ENCODE measurements at regions of chr6 and their contacts with region 1.

Region 1: DNA sequence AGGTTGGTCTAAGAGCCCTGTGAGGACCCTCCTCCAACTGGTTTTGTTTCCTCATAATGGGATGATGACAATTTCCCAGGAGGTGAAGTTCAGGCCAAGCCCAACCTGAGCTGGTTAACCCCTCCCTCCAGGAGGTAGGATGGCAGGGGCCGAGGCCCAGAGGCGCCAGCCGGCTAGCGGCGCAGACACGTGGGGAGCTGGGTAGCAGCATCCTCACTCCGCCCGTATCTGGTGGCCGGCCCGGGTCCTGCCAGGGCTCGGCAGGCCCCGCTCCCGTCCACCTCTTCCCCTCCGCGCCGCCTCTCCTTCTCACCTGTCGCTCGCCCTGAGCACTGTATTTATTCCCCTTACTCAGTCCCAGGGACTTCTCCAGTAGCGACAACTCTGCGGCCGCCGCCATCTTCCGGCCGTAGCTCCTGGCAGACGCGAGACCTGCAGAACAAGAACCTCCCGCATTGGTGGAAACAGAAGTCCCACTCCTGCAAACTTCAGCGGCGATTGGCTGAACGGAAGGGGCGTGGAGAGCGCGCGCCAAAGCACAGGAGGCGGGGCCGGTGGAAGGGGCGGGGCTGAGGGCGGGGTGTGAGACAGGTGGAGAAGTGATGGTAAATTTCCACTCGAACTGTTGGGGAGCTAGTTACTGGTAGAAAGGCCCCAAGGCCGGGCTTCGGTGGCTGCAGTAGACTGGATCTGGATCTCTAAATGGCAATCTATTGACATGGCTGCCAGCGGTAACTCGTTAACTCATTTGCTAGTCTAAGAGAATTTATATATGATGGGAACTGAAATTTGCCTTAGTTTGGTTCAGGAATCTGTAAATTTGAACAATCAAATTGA is at the start of gene EEF1E1:
- DNase-seq: peak; percentile 99
- ATAC-seq: peak; percentile 91
- H3K4me3 ChIP-seq: peak within 1 kb of the TSS; percentile 81
- H3K27ac ChIP-seq: peak within 1 kb of the TSS; percentile 85
- H3K4me1 ChIP-seq: peaks cover 5 to 18% of the 10 kb centered on the region in 2 experiments; a peak in 3 of 5 replicates
- H3K27me3 ChIP-seq: no peaks in the 10 kb centered on the region
- CTCF ChIP-seq: no peak
- EP300 ChIP-seq: peak; percentile 34; the same call in 1 of the 2 replicates
- POLR2A ChIP-seq: peak; percentile 96
- RAD21 ChIP-seq: no peak
- polyA plus RNA-seq, gene EEF1E1: 1,212 to 1,355 TPM

Region 2: DNA sequence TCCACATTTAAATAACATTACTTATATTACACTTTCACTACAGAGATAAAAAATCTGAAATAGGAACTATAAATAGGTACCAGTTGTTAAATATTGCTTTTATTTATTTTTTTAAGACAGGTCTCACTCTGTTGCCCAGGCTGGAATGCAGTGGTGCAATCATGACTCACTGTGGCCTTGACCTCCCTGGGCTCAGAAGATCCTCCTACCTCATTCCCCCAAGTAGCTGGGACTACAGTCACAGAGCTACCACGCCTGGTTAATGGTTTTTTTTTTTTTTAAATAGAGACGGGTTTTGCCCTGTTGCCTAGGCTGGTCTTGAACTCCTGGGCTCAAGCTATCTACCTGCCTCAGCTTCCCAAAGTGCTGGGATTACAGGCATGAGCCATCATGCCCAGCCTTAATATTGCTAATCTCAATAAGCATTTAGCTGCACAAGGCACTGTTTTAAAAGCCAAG is 17.3 kb before region 1 on chr6:
- CTCF ChIA-PET with region 1: no interaction called
- POLR2A ChIA-PET with region 1: interaction called, 10 read pairs
- in situ Hi-C with region 1: no loop called
- intact Hi-C with region 1: no loop called
- DNase-seq: peak in 1 of 4 experiments; percentile 77
- ATAC-seq: peak; percentile 90
- H3K4me3 ChIP-seq: no peak overlapping the region
- H3K27ac ChIP-seq: peak overlapping the region; percentile 47; the same call in 1 of the 3 replicates
- H3K4me1 ChIP-seq: peaks cover 0 to 23% of the 10 kb centered on the region in 2 experiments; a peak in 4 of 5 replicates
- H3K27me3 ChIP-seq: no peaks in the 10 kb centered on the region
- CTCF ChIP-seq: no peak
- EP300 ChIP-seq: peak; percentile 38; the same call in 1 of the 2 replicates
- POLR2A ChIP-seq: no peak
- RAD21 ChIP-seq: no peak

Region 3: DNA sequence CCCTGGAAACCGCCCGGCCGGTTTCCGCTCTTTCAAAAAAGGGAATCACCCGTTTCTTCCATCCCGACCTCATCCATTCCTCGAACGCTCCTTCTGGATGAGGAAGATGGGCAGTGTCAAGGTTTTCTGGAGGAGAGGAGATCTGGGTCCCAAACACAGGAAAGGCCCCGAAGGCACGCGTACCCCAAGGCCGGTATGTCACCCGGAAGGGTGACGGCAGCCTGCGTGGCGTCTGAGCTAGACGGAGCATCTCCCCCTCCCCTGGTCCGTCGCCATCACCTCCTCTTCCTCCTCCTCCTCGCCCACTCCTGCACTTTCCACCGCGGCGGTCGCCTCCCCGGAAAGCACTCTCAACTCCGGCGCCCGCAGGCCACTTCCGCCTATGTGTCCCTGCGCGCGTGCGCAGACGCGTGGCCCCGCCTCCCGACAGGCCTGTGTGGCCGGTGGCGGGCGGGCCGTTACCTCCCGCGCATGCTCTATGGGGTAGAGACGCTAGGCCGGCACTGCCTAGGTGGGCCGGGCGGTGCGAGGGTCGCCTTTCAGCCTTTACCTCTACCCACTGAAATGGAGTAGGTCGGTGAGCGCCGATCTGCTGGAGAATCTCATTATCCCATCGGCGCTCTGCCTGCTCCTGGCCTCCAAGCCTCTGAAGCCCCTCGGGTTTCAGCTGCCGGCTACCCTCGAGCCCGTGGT is 333.0 kb after region 1 on chr6 and contains the start of gene SLC35B3:
- CTCF ChIA-PET with region 1: no interaction called
- POLR2A ChIA-PET with region 1: no interaction called
- in situ Hi-C with region 1: no loop called
- intact Hi-C with region 1: loop called (anchors 10 kb)
- DNase-seq: peak; percentile 97 to 98 (median 98)
- ATAC-seq: peak; percentile 96
- H3K4me3 ChIP-seq: peak within 1 kb of the TSS; percentile 90
- H3K27ac ChIP-seq: peak within 1 kb of the TSS; percentile 91
- H3K4me1 ChIP-seq: peaks cover 5 to 9% of the 10 kb centered on the region in 2 experiments
- H3K27me3 ChIP-seq: no peaks in the 10 kb centered on the region
- CTCF ChIP-seq: no peak
- EP300 ChIP-seq: 0 out of 2 replicates have a peak, but pooled peaks have one; percentile 25
- POLR2A ChIP-seq: peak; percentile 96
- RAD21 ChIP-seq: no peak
- polyA plus RNA-seq, gene SLC35B3: 7.6 to 7.8 TPM

Measured in K562 (cell line).